ENCODE measurements at regions of chr12 and their contacts with region 1.

Region 1: GRCh38 chr12:108562348-108563135 is at the start of gene ISCU:
- DNase-seq: peak; percentile 97 to 100 (median 99)
- ATAC-seq: peak; percentile 84
- H3K4me3 ChIP-seq: peak within 1 kb of the TSS; percentile 96
- H3K4me3 Mint-ChIP-seq: peak within 1 kb of the TSS; percentile 94 to 100 (median 100)
- H3K27ac ChIP-seq: peak within 1 kb of the TSS; percentile 98
- H3K27ac Mint-ChIP-seq: peak within 1 kb of the TSS; percentile 98 to 100 (median 99)
- H3K4me1 ChIP-seq: peaks cover 27 to 46% of the 10 kb centered on the region in 2 donors
- H3K4me1 Mint-ChIP-seq: peaks cover 26 to 76% (median 63%) of the 10 kb centered on the region in 7 donors
- H3K27me3 ChIP-seq: no peaks in the 10 kb centered on the region
- H3K27me3 Mint-ChIP-seq: no peaks in the 10 kb centered on the region
- total RNA-seq, gene ISCU: 51.7 to 212 (median 191) TPM

Region 2: DNA sequence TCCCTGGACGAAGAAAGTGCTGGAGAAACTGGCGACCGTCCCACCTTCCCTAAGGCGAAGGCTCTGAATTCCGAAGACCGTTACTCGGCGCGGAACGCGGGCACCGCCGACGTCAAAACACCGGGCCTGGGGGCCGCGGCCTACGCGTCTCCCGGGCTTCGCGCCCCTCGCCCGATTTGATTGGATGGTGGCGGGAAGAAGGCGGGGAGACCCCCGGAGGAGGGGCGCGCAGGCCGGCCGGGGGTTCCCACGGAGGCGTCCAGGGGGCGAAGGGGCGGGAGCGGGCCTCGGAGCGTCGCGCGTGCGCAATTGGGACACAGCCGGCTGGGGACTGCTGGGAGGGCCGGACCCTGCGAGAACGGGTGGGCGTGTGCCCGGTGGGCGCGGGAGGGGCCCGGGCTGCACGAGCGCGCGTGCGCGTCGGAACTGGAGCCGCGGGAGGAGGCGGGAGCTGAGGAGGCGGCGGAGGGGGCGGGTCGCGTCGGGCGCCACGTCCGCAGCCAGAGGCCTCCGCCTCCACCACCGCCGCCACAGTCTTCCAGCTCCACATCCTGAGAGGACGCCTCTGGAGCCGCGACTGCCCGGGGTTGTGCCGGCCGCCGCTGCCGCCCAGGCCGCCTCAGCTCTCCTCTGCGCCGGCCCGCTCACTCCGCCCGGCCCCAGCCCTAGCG is 1607.0 kb before region 1 on chr12 and contains the start of gene TMEM263:
- CTCF ChIA-PET with region 1: no interaction called
- POLR2A ChIA-PET with region 1: interaction called, 3 read pairs
- intact Hi-C with region 1: loop called (anchors 5 kb)
- DNase-seq: peak; percentile 78 to 91 (median 86)
- ATAC-seq: peak; percentile 90
- H3K4me3 ChIP-seq: peak within 1 kb of the TSS; percentile 94
- H3K4me3 Mint-ChIP-seq: peak within 1 kb of the TSS; percentile 88 to 99 (median 96)
- H3K27ac ChIP-seq: peak within 1 kb of the TSS; percentile 94
- H3K27ac Mint-ChIP-seq: peak within 1 kb of the TSS; percentile 93 to 97 (median 96)
- H3K4me1 ChIP-seq: peaks cover 8 to 10% of the 10 kb centered on the region in 2 donors
- H3K4me1 Mint-ChIP-seq: peaks cover 17 to 57% (median 38%) of the 10 kb centered on the region in 7 donors
- H3K27me3 ChIP-seq: no peaks in the 10 kb centered on the region
- H3K27me3 Mint-ChIP-seq: peaks cover 0 to 11% (median 0%) of the 10 kb centered on the region in 5 donors
- total RNA-seq, gene TMEM263: 20.0 to 45.5 (median 31.5) TPM

Region 3: DNA sequence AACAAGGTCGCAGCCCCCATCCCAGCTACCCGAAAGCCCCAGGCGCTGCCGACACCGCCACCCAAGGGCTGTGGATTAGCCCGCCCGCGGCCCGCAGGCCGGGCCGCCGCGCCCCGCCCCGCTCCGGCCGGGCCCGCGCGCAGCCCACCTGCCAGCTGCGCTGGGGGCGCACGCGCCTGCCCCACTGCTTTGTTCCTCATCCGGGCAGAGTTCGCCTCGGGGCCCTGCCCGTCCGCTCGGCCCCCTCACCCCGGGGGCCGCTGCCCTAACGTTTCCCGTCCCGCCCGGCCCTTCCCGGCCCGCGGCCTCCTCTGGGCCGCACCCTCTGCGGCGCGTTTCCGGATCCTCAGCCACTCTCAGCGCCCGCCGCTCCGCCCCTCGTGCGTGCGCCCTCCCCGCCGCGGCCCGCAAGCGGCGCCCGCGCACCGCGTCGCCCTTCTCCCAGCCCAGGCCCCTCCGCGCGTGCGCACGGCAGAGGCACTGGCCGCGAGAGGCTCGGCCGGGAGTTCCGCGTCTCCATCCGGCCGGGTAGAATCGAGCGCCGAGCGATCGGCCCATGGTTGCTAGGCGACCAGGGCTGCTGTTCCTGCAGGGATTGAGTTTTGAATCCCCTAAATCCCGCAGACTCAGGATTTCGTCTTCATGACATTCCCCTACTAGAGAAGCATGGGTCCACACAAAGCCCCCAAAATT is 801.6 kb before region 1 on chr12 and contains the start of gene PRDM4:
- CTCF ChIA-PET with region 1: no interaction called
- POLR2A ChIA-PET with region 1: no interaction called
- intact Hi-C with region 1: loop called (anchors 1 to 2 kb)
- DNase-seq: peak; percentile 85 to 96 (median 93)
- ATAC-seq: peak; percentile 99
- H3K4me3 ChIP-seq: peak within 1 kb of the TSS; percentile 83
- H3K4me3 Mint-ChIP-seq: peak within 1 kb of the TSS; percentile 85 to 94 (median 91)
- H3K27ac ChIP-seq: peak within 1 kb of the TSS; percentile 78
- H3K27ac Mint-ChIP-seq: peak within 1 kb of the TSS; percentile 85 to 96 (median 91)
- H3K4me1 ChIP-seq: peaks cover 21% of the 10 kb centered on the region in 2 donors
- H3K4me1 Mint-ChIP-seq: peaks cover 19 to 52% (median 35%) of the 10 kb centered on the region in 7 donors
- H3K27me3 ChIP-seq: no peaks in the 10 kb centered on the region
- H3K27me3 Mint-ChIP-seq: peaks cover 0 to 5% (median 0%) of the 10 kb centered on the region in 5 donors
- total RNA-seq, gene PRDM4: 32.4 to 41.3 (median 36.4) TPM

Region 4: GRCh38 chr12:108633534-108634248 is 71.1 kb after region 1 on chr12 and contains the start of gene SELPLG:
- CTCF ChIA-PET with region 1: interaction called, 23 read pairs
- POLR2A ChIA-PET with region 1: interaction called, 200 read pairs
- intact Hi-C with region 1: loop called (anchors 1 kb)
- DNase-seq: peak; percentile 70 to 96 (median 93)
- ATAC-seq: peak; percentile 83
- H3K4me3 ChIP-seq: peak within 1 kb of the TSS; percentile 98
- H3K4me3 Mint-ChIP-seq: peak within 1 kb of the TSS; percentile 90 to 100 (median 99)
- H3K27ac ChIP-seq: peak within 1 kb of the TSS; percentile 89
- H3K27ac Mint-ChIP-seq: peak within 1 kb of the TSS; percentile 95 to 100 (median 98)
- H3K4me1 ChIP-seq: peaks cover 50 to 53% of the 10 kb centered on the region in 2 donors
- H3K4me1 Mint-ChIP-seq: peaks cover 50 to 73% (median 66%) of the 10 kb centered on the region in 7 donors
- H3K27me3 ChIP-seq: no peaks in the 10 kb centered on the region
- H3K27me3 Mint-ChIP-seq: no peaks in the 10 kb centered on the region
- total RNA-seq, gene SELPLG: 54.3 to 217 (median 154) TPM

Region 5: DNA sequence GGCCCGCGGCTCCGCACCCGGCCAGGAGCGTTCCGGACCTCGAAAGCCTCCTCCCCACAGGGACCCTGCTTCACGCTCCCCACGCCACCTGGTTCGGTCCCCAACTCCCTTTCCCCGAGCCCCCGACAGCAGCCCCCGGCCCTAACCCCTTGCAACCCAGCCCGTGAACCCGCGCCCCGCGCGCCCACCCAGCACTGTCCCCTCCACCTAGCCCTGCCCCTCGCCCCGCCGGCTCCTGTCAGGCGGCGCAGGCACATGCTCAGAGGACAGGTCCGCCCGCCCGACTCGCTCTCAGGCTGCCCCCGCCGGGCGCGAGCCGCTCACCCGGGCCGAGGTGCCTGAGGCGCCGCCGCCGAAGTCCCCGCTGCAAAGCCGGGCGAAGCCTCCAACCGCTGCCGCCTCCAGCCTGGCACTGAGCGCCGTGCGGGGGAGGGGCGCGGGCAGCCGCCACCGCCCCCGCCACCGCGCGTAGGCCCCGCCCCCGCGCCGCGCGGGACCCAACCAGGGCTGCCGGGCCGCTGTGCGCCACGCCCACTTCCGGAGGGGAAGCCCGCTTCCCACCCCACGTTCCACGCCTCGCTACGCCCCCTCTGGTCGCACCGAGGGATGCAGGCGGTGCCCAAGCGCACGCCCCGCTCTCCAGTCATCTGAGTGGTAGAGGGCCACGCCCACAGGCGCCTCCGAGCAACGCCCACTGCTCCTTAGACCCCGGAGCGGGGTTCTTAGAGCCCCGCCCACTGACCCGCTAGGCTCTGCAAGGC is 168.7 kb after region 1 on chr12 and contains the start of gene CORO1C:
- CTCF ChIA-PET with region 1: no interaction called
- POLR2A ChIA-PET with region 1: no interaction called
- intact Hi-C with region 1: loop called (anchors 1 kb)
- DNase-seq: peak; percentile 90 to 99 (median 94)
- ATAC-seq: peak; percentile 88
- H3K4me3 ChIP-seq: peak within 1 kb of the TSS; percentile 99
- H3K4me3 Mint-ChIP-seq: peak within 1 kb of the TSS; percentile 94 to 99 (median 96)
- H3K27ac ChIP-seq: peak within 1 kb of the TSS; percentile 78
- H3K27ac Mint-ChIP-seq: peak within 1 kb of the TSS; percentile 79 to 98 (median 96)
- H3K4me1 ChIP-seq: peaks cover 4 to 6% of the 10 kb centered on the region in 2 donors
- H3K4me1 Mint-ChIP-seq: peaks cover 0 to 44% (median 19%) of the 10 kb centered on the region in 7 donors
- H3K27me3 ChIP-seq: no peaks in the 10 kb centered on the region
- H3K27me3 Mint-ChIP-seq: peaks cover 0 to 9% (median 0%) of the 10 kb centered on the region in 5 donors
- total RNA-seq, gene CORO1C: 7.6 to 71.8 (median 15.7) TPM

Region 6: GRCh38 chr12:109052414-109053323 is 490.1 kb after region 1 on chr12 and contains the start of gene USP30:
- CTCF ChIA-PET with region 1: no interaction called
- POLR2A ChIA-PET with region 1: interaction called, 6 read pairs
- intact Hi-C with region 1: loop called (anchors 1 kb)
- DNase-seq: peak; percentile 68 to 86 (median 77)
- ATAC-seq: peak; percentile 93
- H3K4me3 ChIP-seq: peak within 1 kb of the TSS; percentile 91
- H3K4me3 Mint-ChIP-seq: peak within 1 kb of the TSS; percentile 86 to 99 (median 96)
- H3K27ac ChIP-seq: peak within 1 kb of the TSS; percentile 89
- H3K27ac Mint-ChIP-seq: peak within 1 kb of the TSS; percentile 89 to 98 (median 95)
- H3K4me1 ChIP-seq: peaks cover 13% of the 10 kb centered on the region in 2 donors
- H3K4me1 Mint-ChIP-seq: peaks cover 14 to 27% (median 17%) of the 10 kb centered on the region in 7 donors
- H3K27me3 ChIP-seq: no peaks in the 10 kb centered on the region
- H3K27me3 Mint-ChIP-seq: no peaks in the 10 kb centered on the region
- total RNA-seq, gene USP30: 7.8 to 15.7 (median 12.9) TPM

Region 7: DNA sequence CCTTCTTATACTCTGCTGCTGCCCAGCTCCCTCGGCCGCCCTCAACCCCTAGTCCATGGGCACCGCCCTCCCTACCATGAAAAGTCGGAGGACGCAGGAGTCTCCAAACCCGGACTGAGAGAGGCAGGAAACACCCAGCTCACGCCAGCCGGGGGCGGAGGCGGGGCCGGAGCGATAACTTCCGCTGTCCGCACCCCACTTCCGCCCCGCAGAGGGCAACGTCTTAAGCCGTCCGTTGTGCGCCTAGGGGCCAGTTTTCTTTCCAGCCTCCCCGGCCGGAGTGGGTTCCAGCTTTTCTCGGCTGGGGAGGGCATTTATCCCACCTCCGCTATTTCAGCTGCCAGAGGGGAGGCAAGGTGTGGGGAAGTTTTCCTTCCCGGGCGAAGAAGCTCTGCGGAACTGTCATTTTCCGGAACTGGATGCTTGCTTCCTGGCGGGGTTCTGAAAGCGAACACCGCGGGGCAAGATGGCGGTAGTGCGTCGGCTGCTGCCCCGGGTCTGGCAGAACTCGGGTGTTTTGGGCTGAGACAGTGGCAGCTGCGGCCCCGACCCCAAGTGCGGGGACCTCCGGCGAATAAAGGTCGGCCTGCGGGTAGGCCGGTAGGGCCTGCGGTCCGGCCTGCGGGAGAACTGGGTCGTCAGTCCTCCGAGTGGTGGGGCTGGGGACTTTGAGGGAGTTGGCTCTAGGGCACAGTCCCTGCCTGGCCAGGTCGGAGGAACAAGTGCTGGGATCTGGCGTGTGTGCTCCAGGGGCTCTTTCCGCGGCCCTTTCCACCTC is 914.8 kb after region 1 on chr12 and contains the starts of genes KCTD10 and UBE3B:
- CTCF ChIA-PET with region 1: no interaction called
- POLR2A ChIA-PET with region 1: no interaction called
- intact Hi-C with region 1: loop called in 1 of 2 experiments (anchors 5 kb)
- DNase-seq: peak; percentile 81 to 90 (median 87)
- ATAC-seq: peak; percentile 97
- H3K4me3 ChIP-seq: peak within 1 kb of the TSS; percentile 93
- H3K4me3 Mint-ChIP-seq: peak within 1 kb of the TSS; percentile 89 to 99 (median 96)
- H3K27ac ChIP-seq: peak within 1 kb of the TSS; percentile 90
- H3K27ac Mint-ChIP-seq: peak within 1 kb of the TSS; percentile 96 to 99 (median 98)
- H3K4me1 ChIP-seq: peaks cover 21 to 26% of the 10 kb centered on the region in 2 donors
- H3K4me1 Mint-ChIP-seq: peaks cover 24 to 60% (median 49%) of the 10 kb centered on the region in 7 donors
- H3K27me3 ChIP-seq: no peaks in the 10 kb centered on the region
- H3K27me3 Mint-ChIP-seq: no peaks in the 10 kb centered on the region
- total RNA-seq, gene KCTD10: 28.6 to 41.1 (median 29.1) TPM
- total RNA-seq, gene UBE3B: 28.7 to 62.8 (median 35.6) TPM

Measured in naive thymus-derived CD4-positive, alpha-beta T cell (primary cell).